AG04449 (cell line): ENCODE measurements at regions of chr6 and their contacts with region 1.

Region 1: GRCh38 chr6:52263709-52264540 is 19.6 kb upstream of the IL17F start:
- DNase-seq: peak; percentile 17
- H3K4me3 ChIP-seq: no peak overlapping the region
- CTCF ChIP-seq: peak; percentile 91

Region 2: DNA sequence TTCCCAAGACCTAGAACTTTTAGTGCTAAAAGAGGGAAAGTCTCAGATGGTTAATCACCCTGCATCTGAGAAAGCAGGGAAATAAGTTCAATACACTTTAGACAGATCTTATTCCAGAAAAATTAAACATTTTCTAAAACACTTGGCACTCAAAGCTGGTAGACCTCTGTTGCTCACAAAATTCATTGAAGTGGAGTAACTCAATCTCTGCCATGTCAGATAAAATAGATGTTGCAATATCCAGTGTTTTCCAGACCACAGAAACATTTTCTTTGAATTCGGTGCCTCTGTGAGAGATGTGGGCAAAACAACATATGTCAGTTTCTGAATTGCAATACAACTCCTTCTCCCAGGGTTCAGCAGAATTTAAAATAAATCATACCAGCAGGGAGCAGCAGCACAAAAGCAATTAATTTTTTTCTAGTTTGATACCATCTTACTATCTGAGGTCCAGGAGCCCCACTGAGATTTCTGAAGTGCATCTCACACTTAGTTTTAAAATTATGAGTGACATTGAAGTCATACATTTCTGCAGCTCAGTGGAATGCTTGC is 165.2 kb before region 1 on chr6:
- CTCF ChIA-PET with region 1: interaction called, 12 read pairs
- POLR2A ChIA-PET with region 1: no interaction called
- DNase-seq: no peak
- H3K4me3 ChIP-seq: no peak overlapping the region
- CTCF ChIP-seq: no peak

Region 3: DNA sequence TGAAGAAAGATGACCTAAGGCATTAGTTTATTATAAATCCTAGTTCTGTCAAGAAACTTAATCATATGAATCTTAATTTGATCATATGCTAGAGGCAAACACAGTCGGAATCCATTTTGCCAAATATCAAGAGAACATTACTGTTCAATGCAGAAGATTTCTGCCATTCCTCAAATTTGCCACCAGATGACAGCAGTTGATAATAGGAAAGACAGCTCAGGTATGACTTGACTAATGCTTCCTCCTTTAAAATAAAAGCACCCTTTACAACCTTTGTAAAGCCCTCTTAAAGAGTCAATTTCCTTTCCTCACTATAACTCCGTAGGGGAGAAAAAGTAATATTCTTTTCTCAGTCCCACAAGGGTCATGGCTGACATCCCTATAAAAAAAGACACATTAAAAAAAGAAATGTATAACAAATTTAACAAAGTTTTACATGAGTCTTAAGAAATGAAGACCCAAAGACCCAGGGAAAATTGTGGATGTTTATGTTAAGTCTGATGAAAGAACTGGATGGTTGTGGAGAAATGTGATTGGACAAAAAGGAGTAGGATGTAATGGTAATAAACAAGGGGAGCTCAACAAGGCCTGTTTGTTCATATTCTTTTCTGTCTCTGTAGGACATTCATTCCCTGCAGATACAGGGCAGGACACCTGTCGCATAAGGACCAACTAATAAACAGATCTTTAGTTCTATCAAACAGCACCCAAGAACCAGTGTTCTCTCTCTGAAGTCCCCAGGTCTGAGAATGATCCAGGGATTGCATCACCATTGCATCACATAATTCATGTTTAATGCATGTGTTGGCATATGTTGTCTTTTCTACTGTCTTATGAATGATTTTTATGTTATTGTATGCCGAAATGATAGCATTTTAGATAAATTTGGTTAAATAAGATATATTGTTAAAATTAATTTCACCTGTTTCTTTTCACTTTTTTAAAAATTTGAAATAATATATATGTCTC is 100.7 kb before region 1 on chr6:
- CTCF ChIA-PET with region 1: interaction called, 94 read pairs
- POLR2A ChIA-PET with region 1: no interaction called
- DNase-seq: no peak
- H3K4me3 ChIP-seq: no peak overlapping the region
- CTCF ChIP-seq: peak; percentile 45

Region 4: GRCh38 chr6:52243282-52243893 is 20.5 kb before region 1 on chr6:
- CTCF ChIA-PET with region 1: interaction called, 12 read pairs
- POLR2A ChIA-PET with region 1: no interaction called
- DNase-seq: no peak
- H3K4me3 ChIP-seq: no peak overlapping the region
- CTCF ChIP-seq: no peak

Region 5: GRCh38 chr6:52284460-52285176 is 20.7 kb after region 1 on chr6 and contains the start of gene MCM3:
- CTCF ChIA-PET with region 1: interaction called, 50 read pairs
- POLR2A ChIA-PET with region 1: no interaction called
- DNase-seq: peak; percentile 95
- H3K4me3 ChIP-seq: peak within 1 kb of the TSS; percentile 83
- CTCF ChIP-seq: peak; percentile 4

Region 6: DNA sequence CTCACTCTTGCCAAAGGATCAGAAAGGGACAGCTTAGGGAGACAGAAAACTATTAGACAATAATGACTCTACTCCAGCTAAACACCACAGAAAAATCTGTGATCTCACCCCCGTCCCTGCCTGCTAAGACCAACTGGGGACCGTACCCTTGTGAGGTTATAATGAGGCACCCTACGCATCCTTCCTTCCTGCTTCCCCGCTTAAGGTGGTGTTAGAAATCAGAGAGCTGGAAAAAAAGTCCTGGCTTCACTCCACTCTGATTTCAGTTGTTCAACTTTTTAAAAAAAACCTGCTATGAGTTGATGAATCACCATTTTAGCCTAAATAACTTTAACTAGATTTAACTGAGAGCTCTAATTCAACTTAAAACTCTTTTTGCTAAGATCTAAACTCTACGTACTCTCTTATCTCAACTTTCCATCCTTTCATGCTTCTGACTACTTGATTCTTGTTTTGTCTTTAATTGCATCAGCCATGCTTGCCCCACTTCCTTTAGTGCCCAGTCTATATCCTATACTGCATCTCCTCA is 371.2 kb after region 1 on chr6:
- CTCF ChIA-PET with region 1: no interaction called
- POLR2A ChIA-PET with region 1: no interaction called
- DNase-seq: no peak
- H3K4me3 ChIP-seq: no peak overlapping the region
- CTCF ChIP-seq: no peak

Region 7: GRCh38 chr6:52724406-52725121 is 460.6 kb after region 1 on chr6:
- CTCF ChIA-PET with region 1: no interaction called
- POLR2A ChIA-PET with region 1: no interaction called
- DNase-seq: no peak
- H3K4me3 ChIP-seq: no peak overlapping the region
- CTCF ChIP-seq: peak; percentile 77